ENCODE measurements at regions of chr1 and their contacts with region 1.

Region 1: DNA sequence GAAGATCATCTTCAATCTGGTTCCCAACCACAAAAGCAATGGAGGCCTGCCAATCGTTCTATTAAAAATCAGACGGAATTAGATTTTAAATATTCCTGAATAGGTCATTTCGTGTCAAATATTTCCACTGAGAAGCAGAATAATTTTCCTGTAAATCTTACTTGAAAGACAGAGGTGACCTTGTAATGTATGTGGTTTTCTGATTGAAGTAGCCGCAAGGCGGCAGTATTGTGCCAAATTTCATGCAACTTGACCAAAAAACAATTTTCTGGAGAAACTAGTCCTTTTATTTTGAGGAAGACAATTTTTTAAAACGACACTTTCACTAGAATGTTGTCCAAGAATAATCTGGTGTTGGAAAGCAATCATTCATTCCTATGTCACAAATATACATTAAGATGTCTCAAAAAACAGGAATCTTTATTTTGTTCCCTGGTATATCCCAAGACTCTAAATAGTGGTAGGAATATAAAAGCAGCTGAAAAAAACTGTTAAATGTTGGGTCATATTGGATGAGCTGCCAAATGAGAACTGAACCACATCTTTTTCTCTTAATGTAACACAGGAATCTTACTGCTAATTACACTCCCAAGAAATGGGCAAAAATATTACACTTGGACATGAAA is 33.6 kb downstream of the SPAG17 start:
- DNase-seq: peak; percentile 46
- ATAC-seq: no peak; the same call in 1 of the 2 replicates
- H3K4me3 ChIP-seq: no peak overlapping the region
- H3K27ac ChIP-seq: no peak overlapping the region
- H3K4me1 ChIP-seq: no peaks in the 10 kb centered on the region
- H3K27me3 ChIP-seq: no peaks in the 10 kb centered on the region
- CTCF ChIP-seq: peak; percentile 70

Region 2: GRCh38 chr1:119008483-119009311 is 857.3 kb after region 1 on chr1:
- CTCF ChIA-PET with region 1: no interaction called
- POLR2A ChIA-PET with region 1: no interaction called
- in situ Hi-C with region 1: no loop called
- intact Hi-C with region 1: loop called (anchors 10 kb)
- DNase-seq: peak; percentile 8
- ATAC-seq: peak; percentile 66; the same call in 1 of the 2 replicates
- H3K4me3 ChIP-seq: no peak overlapping the region
- H3K27ac ChIP-seq: no peak overlapping the region
- H3K4me1 ChIP-seq: no peaks in the 10 kb centered on the region
- H3K27me3 ChIP-seq: no peaks in the 10 kb centered on the region; the same call in 1 of the 2 replicates
- CTCF ChIP-seq: peak; percentile 64

Region 3: DNA sequence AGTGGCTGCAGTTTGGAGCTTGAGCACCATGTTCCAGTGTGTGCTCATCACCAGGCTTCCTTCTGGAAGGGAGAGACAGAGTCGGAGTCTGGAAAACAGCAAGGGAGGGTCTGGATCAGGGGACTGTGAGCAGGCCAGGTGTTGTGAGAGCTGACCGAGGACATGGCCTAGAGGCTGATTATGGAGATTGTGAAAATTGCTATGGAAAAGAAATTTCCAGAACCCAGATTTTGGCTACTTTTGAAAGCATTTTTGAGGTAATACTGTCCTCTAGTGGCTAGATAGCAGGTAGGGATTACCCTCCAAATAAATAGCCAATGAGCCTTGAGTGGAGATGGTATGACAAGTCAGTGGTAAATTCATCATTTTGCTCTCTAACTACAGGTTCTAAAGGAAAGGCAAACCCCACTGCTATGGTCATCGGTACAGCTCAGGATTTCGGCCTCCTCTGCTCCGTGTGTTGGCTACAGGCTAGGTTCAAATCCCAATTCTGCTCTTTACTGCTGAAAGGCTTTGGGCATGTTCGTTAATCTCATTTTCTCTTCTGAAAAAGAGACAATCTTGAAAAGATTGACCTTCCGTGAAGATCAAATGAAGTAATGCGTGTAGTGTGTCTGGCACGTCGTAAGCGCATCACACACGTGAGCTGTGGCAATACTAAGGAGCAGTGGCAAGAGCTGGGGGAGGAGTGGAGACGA is 1216.2 kb after region 1 on chr1:
- CTCF ChIA-PET with region 1: no interaction called
- POLR2A ChIA-PET with region 1: no interaction called
- in situ Hi-C with region 1: no loop called
- intact Hi-C with region 1: loop called (anchors 5 kb)
- DNase-seq: peak; percentile 30
- ATAC-seq: peak; percentile 75; the same call in 1 of the 2 replicates
- H3K4me3 ChIP-seq: no peak overlapping the region
- H3K27ac ChIP-seq: no peak overlapping the region
- H3K4me1 ChIP-seq: no peaks in the 10 kb centered on the region
- H3K27me3 ChIP-seq: peaks cover 12% of the 10 kb centered on the region
- CTCF ChIP-seq: peak; percentile 93

Measured in Panc1 (cell line).